ENCODE measurements at regions of chr7 and their contacts with region 1.

Region 1: GRCh38 chr7:135645296-135645904 is 16.9 kb upstream of the STMP1 start:
- DNase-seq: no peak
- H3K4me3 ChIP-seq: no peak overlapping the region
- H3K27me3 ChIP-seq: no peaks in the 10 kb centered on the region
- CTCF ChIP-seq: peak; percentile 76

Region 2: GRCh38 chr7:135274495-135275268 is 370.7 kb before region 1 on chr7:
- CTCF ChIA-PET with region 1: interaction called, 89 read pairs
- POLR2A ChIA-PET with region 1: no interaction called
- DNase-seq: no peak
- H3K4me3 ChIP-seq: no peak overlapping the region
- H3K27me3 ChIP-seq: peaks cover 1% of the 10 kb centered on the region; the same call in 1 of the 2 replicates
- CTCF ChIP-seq: peak; percentile 79

Region 3: DNA sequence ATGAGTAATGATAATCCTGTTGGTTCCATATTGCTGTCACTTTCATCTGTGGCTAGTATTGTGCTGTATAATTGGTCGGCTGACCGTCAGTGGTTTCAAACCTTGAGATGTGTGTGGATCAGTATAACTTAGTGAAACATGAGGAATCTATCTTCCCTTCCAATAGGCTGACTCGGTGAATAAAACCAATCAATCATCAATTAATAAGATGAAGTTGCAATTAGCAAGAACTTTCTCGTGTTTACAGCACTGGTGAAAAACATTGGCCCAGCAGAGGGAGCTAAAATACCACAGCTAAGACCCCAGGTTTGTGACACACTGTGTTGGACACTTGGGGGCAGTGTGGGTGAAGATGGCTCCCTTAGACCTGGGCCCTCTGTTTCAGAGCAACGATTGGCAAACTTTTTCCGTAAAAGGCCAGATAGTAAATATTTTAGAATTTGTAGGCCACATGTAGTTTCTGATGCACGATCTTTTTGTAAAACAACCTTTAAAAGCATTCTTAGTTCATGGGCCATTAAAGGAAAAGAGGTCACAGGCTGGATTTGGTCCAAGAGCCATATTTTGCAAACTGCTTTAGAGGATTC is 363.9 kb before region 1 on chr7:
- CTCF ChIA-PET with region 1: interaction called, 89 read pairs
- POLR2A ChIA-PET with region 1: no interaction called
- DNase-seq: peak; percentile 29
- H3K4me3 ChIP-seq: no peak overlapping the region
- H3K27me3 ChIP-seq: no peaks in the 10 kb centered on the region; the same call in none of the 2 replicates
- CTCF ChIP-seq: peak; percentile 92

Region 4: GRCh38 chr7:135620980-135621850 is 24.2 kb before region 1 on chr7:
- CTCF ChIA-PET with region 1: interaction called, 23 read pairs
- POLR2A ChIA-PET with region 1: interaction called, 4 read pairs
- DNase-seq: peak; percentile 65
- H3K4me3 ChIP-seq: no peak overlapping the region
- H3K27me3 ChIP-seq: no peaks in the 10 kb centered on the region
- CTCF ChIP-seq: peak; percentile 81

Region 5: GRCh38 chr7:135634191-135634878 is 11.1 kb before region 1 on chr7:
- CTCF ChIA-PET with region 1: interaction called, 29 read pairs
- POLR2A ChIA-PET with region 1: no interaction called
- DNase-seq: no peak
- H3K4me3 ChIP-seq: no peak overlapping the region
- H3K27me3 ChIP-seq: no peaks in the 10 kb centered on the region
- CTCF ChIP-seq: no peak

Region 6: GRCh38 chr7:135662373-135663114 is 17.1 kb after region 1 on chr7 and contains the start of gene STMP1:
- CTCF ChIA-PET with region 1: interaction called, 30 read pairs
- POLR2A ChIA-PET with region 1: no interaction called
- DNase-seq: peak; percentile 69
- H3K4me3 ChIP-seq: peak within 1 kb of the TSS; percentile 100
- H3K27me3 ChIP-seq: no peaks in the 10 kb centered on the region
- CTCF ChIP-seq: peak; percentile 77; the same call in 1 of the 2 replicates
- polyA plus RNA-seq, gene STMP1: 17.0 and 37.2 TPM in 2 replicates

Region 7: DNA sequence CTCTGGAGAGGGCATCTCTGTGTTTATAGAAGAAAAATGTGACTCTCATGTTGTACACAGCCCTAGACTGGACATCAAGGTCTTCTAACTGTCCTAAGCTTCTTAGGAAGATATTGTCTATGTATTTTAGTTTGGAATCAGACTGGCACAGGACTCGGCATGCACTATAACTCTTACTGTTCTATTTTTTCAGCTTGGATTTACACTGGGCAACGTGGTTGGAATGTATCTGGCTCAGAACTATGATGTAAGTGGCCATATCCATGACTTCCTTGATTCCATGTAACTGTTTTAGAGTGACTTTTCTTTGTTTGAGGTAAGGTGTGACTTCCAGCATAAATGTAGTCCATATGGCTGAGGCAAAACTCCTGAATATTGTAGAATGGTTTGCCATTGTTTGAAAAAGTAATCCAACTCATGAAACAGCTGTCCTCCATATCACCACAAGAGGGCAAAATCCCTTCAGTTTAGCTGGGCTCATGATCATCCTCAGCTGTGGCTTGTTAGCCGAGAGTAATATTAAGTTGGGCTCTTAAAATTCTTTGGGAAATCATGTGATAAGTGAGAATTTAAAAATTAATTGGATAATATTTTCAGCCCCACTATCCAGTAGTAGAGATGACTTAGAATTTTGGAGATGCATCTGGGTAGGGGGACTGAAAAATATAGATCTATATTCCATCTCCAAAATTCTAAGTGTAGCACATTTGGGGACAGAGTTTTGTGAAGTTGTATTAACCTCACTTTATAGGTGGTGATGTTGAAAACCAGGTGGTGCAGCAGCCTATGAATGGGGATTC is 27.4 kb after region 1 on chr7:
- CTCF ChIA-PET with region 1: interaction called, 24 read pairs
- POLR2A ChIA-PET with region 1: no interaction called
- DNase-seq: no peak
- H3K4me3 ChIP-seq: no peak overlapping the region
- H3K27me3 ChIP-seq: no peaks in the 10 kb centered on the region
- CTCF ChIP-seq: peak; percentile 84

Region 8: DNA sequence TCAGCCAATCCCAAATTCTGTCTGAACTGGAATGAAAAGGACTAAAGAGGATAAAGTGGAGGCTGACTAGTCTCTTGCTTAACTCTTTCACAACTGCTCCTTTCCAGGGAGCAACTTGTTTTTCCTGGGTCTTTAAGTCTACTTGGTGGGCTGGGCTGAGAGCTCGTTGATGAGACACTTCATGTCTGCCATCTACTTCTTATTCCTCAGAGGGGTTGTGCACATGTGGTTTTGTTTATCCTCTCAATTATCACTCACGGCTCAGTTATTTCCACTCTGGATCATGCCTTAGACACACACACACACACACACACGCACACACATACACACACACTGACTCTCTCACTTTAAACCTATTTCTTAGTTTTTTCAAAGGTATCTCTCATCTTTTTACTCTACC is 630.4 kb after region 1 on chr7:
- CTCF ChIA-PET with region 1: no interaction called
- POLR2A ChIA-PET with region 1: no interaction called
- DNase-seq: no peak
- H3K4me3 ChIP-seq: no peak overlapping the region
- H3K27me3 ChIP-seq: no peaks in the 10 kb centered on the region
- CTCF ChIP-seq: no peak